Thyroid gland (tissue), 4 donors: ENCODE measurements at regions of chr22 and their contacts with region 1.

Region 1: GRCh38 chr22:50030297-50031188 is 18.0 kb upstream of the IL17REL start:
- DNase-seq: peak; percentile 75 to 81
- H3K4me3 ChIP-seq: no peak overlapping the region
- H3K27ac ChIP-seq: no peak overlapping the region
- H3K4me1 ChIP-seq: peaks cover 9 to 28% of the 10 kb centered on the region in 2 donors
- H3K27me3 ChIP-seq: no peaks in the 10 kb centered on the region
- CTCF ChIP-seq: peak; percentile 72 to 95 (median 87)
- POLR2A ChIP-seq: no peak

Region 2: DNA sequence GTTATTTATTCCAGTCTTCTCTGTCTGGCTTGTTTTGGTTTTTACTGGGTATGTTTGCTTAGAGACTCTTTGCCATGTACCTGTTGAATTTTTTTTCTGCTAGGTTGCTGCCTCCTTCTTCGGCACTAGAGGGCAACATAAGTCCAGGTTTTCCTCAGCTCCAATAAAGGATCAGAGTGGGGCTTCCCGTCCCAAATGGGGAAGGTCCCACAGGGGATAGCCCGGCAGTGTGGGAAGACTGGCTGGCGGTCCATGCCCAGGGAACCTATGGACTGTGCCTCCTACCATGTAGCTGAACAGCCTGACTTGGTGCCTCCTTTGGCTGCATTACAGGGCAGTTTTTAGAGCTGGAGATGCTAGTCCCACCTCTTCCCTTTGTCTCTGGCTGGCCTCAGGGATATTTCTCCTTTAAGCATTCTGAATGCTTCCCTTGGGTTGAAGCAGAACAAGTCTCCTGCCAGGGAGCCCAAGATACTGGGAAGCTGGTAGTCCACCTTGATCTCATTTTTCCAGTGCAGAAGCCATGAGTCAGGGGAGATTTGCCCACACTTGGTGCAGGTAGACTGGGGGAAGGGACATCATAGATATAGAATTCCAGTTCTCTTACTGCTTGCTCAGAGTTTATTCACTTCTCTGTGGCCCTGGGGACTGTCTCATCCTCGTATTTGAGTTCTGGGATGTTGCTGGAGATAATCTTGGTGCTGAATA is 263.0 kb before region 1 on chr22:
- intact Hi-C with region 1: loop called (anchors 10 kb)
- DNase-seq: no peak
- H3K4me3 ChIP-seq: no peak overlapping the region
- H3K27ac ChIP-seq: no peak overlapping the region
- H3K4me1 ChIP-seq: peaks cover 6 to 11% of the 10 kb centered on the region in 2 donors
- H3K27me3 ChIP-seq: no peaks in the 10 kb centered on the region
- CTCF ChIP-seq: peak in 4 of 6 experiments; percentile 49 to 85 (median 62)
- POLR2A ChIP-seq: no peak

Region 3: DNA sequence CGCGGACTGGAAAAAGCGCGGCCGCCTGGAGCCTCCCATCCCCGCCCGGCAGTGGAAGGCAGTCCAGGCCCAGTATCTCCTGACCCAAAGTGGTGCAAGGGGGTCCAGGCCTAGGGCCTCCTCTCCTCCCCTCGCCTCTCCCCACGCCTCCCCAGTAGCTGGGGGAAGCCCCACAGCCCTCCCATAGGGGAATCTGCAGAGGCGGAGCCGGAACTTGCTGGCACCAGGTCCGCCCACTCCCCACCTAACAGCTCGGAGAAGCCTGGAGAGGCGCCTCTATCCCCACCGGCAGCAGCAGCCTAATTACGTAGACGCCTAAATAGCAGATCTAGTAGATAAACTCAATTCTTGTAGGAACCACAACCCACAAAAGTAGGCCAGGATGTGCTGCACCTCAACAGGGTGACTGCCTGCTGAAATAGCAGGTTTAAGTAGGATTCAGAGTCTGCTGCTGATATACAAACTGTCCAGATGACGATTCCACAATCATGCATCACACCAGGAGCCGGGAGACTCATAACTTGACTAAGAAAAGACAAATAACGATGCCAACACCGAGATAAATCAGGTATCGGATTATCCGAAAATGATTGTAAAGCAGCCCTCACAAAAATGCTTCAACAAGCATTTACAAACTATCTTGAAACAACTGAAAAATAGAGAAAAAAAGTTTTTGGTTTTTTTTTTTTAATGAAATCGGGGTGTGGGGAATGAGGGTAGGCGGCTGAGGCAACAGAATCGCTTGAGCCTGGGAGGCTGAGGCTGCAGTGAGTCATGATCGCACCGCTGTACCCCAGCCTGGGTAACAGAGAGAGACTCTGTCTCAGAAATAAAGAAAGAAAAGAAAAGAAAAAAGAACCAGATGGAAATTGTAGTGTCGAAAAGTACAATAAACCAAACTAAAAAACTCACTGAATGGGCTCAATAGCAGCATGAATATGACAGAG is 191.5 kb before region 1 on chr22:
- intact Hi-C with region 1: no loop called
- DNase-seq: no peak
- H3K4me3 ChIP-seq: no peak overlapping the region
- H3K27ac ChIP-seq: no peak overlapping the region
- H3K4me1 ChIP-seq: no peaks in the 10 kb centered on the region
- H3K27me3 ChIP-seq: no peaks in the 10 kb centered on the region
- CTCF ChIP-seq: no peak
- POLR2A ChIP-seq: no peak

Region 4: DNA sequence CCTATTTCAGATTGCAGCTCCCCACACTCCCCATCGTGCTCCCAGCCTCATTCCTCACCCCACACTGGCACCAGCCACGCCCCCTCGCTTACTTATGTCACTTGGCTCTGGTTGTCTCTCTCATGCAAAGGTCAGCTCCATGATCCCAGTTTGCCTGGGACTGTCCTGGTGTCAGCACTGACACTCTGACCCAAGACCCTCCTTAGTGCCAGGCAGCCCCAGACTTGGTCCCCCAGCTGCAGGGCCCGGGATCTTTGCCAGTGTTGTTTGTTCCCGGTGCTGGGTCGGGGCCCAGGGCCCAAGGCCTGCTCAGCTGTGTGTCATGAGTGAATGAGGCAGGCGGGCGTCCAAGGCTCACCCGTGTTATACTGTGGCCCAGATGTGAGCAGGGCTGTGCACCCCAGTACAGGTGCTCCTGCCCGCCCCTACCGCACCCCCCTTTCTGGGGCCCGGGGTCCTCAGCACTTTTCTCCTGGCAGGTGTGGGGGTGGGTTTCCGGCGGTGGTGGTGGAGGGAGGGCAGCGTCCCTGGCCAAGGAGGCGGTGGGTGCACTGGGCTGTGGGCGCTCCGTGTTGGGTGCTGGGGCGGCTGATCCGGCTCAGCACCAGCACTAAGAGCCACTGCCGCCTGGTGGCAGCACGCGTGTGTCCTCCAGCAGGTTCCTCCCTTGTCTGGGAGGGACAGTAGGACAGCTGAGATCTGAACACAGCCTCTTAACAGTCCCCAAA is 37.5 kb before region 1 on chr22:
- intact Hi-C with region 1: loop called (anchors 5 kb)
- DNase-seq: peak; percentile 66 to 67
- H3K4me3 ChIP-seq: no peak overlapping the region
- H3K27ac ChIP-seq: no peak overlapping the region
- H3K4me1 ChIP-seq: peaks cover 0 to 8% of the 10 kb centered on the region in 2 donors
- H3K27me3 ChIP-seq: no peaks in the 10 kb centered on the region
- CTCF ChIP-seq: peak; percentile 43 to 74 (median 66)
- POLR2A ChIP-seq: no peak

Region 5: DNA sequence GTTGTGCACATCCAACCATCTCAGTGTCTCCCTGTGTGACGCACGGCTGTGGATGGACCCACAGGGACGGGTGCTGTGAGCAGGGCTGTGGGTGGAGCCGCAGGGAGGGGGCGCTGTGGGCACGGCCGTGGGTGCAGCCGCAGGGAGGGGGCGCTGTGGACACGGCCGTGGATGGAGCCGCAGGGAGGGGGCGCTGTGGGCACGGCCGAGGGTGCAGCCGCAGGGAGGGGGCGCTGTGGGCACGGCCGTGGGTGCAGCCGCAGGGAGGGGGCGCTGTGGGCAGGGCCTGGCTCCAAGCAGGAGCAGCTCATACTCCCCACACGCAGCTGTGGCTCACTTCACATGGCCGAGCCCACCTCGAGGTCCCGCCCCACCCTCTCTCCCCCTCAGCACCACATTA is 245.6 kb after region 1 on chr22:
- intact Hi-C with region 1: no loop called
- DNase-seq: peak; percentile 48 to 49
- H3K4me3 ChIP-seq: no peak overlapping the region
- H3K27ac ChIP-seq: no peak overlapping the region
- H3K4me1 ChIP-seq: peaks cover 10 to 12% of the 10 kb centered on the region in 2 donors
- H3K27me3 ChIP-seq: no peaks in the 10 kb centered on the region
- CTCF ChIP-seq: peak in 2 of 6 experiments; percentile 27 to 50
- POLR2A ChIP-seq: no peak